ENCODE measurements at regions of chr17 and their contacts with region 1.

Region 1: GRCh38 chr17:57415751-57416207 is 159.5 kb downstream of the MSI2 start:
- DNase-seq: no peak
- ATAC-seq: no peak
- H3K4me3 ChIP-seq: no peak overlapping the region
- H3K4me1 ChIP-seq: peaks cover 11% of the 10 kb centered on the region
- CTCF ChIP-seq: no peak

Region 2: DNA sequence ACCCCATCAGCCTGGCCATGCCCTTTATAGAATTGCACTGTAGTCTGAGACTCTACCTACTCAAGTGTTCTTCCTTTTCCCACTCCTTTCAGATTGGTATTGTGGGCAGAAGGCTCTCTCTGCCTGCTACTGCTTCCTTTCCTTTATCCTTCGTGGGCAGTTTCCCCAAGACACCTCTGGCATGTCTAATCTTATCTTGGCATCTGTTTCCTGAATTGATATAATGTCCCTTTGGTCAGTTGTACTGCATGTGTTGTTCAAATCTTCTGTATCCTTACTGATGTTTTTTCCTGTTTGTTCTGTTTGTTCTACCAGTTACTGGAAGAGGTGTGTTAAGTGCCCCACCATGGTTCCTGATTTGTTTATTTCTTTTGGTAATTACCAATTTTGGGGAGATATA is 189.0 kb before region 1 on chr17:
- intact Hi-C with region 1: no loop called
- DNase-seq: no peak
- ATAC-seq: no peak
- H3K4me3 ChIP-seq: no peak overlapping the region
- H3K4me1 ChIP-seq: no peaks in the 10 kb centered on the region
- CTCF ChIP-seq: no peak

Region 3: DNA sequence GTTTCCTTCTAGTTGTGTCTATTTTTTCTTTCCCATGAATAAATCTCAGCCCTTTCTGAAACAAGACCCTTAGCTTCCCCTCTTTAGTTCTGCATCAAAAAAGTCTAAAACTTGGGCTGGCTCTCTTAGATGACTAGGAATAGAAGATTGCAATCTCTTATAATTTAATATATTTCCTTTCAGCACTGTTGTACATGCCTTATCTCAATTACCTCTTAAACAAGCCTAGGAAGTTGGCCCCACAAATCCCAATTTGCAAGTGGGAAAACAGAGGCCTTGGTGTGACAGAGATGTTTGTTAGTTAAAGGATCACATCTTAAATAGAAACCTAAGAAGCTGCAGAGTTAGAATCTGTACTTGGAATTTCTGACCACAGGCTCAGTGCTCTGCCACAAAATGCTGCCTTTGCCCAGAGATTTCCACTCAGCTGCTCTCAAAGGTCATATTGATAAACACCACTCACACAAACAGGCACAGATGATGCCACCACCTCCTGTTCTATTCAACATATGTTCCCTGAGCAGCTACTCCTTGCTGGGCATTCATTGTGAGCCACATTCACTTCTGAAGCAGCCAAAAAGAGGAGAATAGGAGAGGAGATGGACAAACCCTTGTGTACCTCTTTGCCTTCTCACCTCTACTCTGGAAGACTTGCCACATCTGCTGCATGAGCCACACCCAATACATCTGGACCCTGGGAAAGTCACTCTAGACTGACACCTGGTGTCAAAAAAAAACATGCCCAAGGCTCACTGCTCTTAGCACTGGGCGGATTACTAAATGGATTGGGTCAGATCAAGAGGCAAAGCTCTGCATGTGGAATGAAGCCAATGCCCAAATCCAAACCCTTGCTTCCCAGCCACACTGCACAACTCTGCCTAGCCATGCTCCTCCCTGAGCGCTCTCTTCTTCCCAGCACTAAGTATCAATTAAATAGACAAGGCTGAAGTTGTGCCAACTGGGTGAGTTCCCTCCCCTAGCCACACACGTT is 323.9 kb after region 1 on chr17:
- intact Hi-C with region 1: loop called in 1 of 2 experiments (anchors 5 kb)
- DNase-seq: peak in 1 of 3 donors; percentile 30
- ATAC-seq: peak; percentile 77
- H3K4me3 ChIP-seq: no peak overlapping the region
- H3K4me1 ChIP-seq: no peaks in the 10 kb centered on the region
- CTCF ChIP-seq: no peak